AG04449 (cell line): ENCODE measurements at regions of chr12 and their contacts with region 1.

Region 1: GRCh38 chr12:124917135-124917840 is 2.8 kb upstream of the UBC start:
- DNase-seq: peak; percentile 98
- H3K4me3 ChIP-seq: peak overlapping the region; percentile 40
- CTCF ChIP-seq: no peak

Region 2: DNA sequence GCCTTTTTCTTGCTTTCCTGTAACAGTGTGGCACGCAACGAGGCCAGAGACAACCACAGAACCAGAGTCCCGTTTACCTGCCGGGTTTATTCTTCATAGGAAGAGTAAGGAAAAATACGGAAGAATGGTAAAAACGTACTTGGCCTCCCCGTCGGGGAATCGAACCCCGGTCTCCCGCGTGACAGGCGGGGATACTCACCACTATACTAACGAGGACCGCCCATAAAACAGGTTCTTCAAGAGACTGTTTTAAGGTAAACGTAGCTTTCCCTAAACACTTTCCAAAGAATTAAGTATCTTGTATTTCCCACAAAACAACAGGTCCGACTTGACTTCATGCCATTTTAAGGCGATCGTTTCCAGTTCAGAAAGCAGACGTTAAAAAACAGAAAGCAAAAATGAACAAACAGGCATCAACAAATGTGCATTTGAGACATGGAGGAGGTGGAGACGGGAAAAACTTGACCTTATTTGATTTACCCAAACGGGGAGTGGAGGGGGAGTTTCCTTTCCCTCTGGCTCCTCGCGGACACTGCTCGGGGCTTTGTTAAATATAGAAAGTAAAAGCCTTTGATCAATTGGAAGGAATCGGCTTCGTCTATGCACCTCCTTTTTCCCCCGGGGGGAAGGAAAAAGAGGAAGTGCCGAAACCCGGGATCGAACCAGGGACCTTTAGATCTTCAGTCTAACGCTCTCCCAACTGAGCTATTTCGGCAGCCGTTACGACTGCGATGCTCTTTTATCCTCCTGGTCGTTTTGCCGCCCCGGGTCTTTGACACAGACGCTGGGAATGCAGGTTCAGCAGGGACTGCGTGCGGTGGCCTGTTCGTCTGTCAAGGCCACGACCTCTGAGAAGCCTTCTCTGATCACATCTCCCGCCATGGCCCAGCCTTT is 10.2 kb after region 1 on chr12:
- CTCF ChIA-PET with region 1: interaction called, 6 read pairs
- POLR2A ChIA-PET with region 1: interaction called, 23 read pairs
- DNase-seq: no peak
- H3K4me3 ChIP-seq: peak overlapping the region; percentile 80
- CTCF ChIP-seq: no peak